ENCODE measurements at regions of chr18 and their contacts with region 1.

Region 1: GRCh38 chr18:47163241-47163640 is 12.9 kb downstream of the IER3IP1 start:
- DNase-seq: no peak
- ATAC-seq: peak; percentile 93
- H3K4me3 ChIP-seq: 0 out of 2 replicates have a peak overlapping the region, but pooled peaks have one; percentile 7
- H3K27ac ChIP-seq: peak overlapping the region; percentile 17; the same call in 1 of the 2 replicates
- H3K4me1 ChIP-seq: peaks cover 13% of the 10 kb centered on the region
- H3K27me3 ChIP-seq: no peaks in the 10 kb centered on the region
- CTCF ChIP-seq: no peak
- EP300 ChIP-seq: no peak
- POLR2A ChIP-seq: no peak
- RAD21 ChIP-seq: no peak

Region 2: GRCh38 chr18:46917108-46917802 is 246.0 kb before region 1 on chr18 and contains the starts of genes KATNAL2 and PIAS2:
- CTCF ChIA-PET with region 1: no interaction called
- POLR2A ChIA-PET with region 1: no interaction called
- RAD21 ChIA-PET with region 1: no interaction called
- SMC1A ChIA-PET with region 1: no interaction called
- in situ Hi-C with region 1: no loop called
- intact Hi-C with region 1: loop called (anchors 10 kb)
- DNase-seq: no peak
- ATAC-seq: peak; percentile 90
- H3K4me3 ChIP-seq: peak within 1 kb of the TSS; percentile 94
- H3K27ac ChIP-seq: peak within 1 kb of the TSS; percentile 82
- H3K4me1 ChIP-seq: no peaks in the 10 kb centered on the region; the same call in 1 of the 2 replicates
- H3K27me3 ChIP-seq: no peaks in the 10 kb centered on the region
- CTCF ChIP-seq: peak in 1 of 3 experiments; percentile 42; a peak in 2 of 6 replicates
- EP300 ChIP-seq: no peak
- POLR2A ChIP-seq: peak; percentile 97
- RAD21 ChIP-seq: peak; percentile 53; the same call in 1 of the 2 replicates
- polyA plus RNA-seq, gene KATNAL2: 0.53 to 0.95 TPM
- polyA plus RNA-seq, gene PIAS2: 4.0 to 7.2 TPM

Region 3: GRCh38 chr18:47075098-47075883 is 88.0 kb before region 1 on chr18:
- CTCF ChIA-PET with region 1: no interaction called
- POLR2A ChIA-PET with region 1: no interaction called
- RAD21 ChIA-PET with region 1: no interaction called
- SMC1A ChIA-PET with region 1: no interaction called
- in situ Hi-C with region 1: no loop called
- intact Hi-C with region 1: no loop called
- DNase-seq: no peak
- ATAC-seq: peak; percentile 48
- H3K4me3 ChIP-seq: no peak overlapping the region
- H3K27ac ChIP-seq: no peak overlapping the region
- H3K4me1 ChIP-seq: no peaks in the 10 kb centered on the region
- H3K27me3 ChIP-seq: no peaks in the 10 kb centered on the region; a peak in 1 of 4 replicates
- CTCF ChIP-seq: no peak
- EP300 ChIP-seq: no peak
- POLR2A ChIP-seq: no peak
- RAD21 ChIP-seq: no peak

Region 4: DNA sequence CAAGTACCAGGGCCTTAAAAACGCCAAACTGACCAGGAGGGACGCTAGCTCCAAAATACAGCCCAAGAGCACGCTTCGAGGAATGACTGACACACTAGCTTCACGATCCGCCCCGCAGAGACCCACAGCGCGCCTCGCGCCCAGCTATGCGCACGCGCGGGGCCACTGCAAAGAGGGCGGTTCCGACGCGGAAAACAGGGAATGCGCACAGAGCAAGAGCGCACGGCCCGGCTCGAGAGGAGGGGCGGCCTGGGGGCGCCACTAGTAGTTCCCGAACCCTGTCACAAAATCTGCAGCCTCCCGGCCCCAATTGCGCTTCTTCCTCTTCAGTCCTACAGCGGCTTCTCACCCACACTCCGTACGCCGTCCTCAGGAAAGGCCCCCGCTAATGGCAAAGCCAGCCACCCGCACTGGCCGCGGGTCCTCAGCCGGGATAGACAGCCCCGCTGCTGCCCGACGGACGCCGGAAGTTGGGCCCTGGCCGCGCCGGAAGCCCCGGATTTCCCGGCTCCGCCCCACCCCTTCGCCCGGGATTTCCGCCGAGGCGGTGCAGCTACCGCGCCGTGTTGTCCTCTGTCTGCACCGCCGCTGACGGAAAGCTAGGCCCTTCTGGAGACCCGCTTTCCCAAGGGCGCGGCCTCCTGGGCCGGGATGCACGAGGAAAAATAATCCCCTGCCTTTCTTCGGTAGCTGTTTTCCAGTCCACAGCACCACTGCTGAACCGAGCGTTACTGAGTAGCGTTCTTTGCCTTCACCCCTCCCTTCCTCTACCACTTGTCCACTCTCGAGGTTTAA is 13.0 kb before region 1 on chr18 and contains the start of gene HDHD2:
- CTCF ChIA-PET with region 1: interaction called, 7 read pairs
- POLR2A ChIA-PET with region 1: interaction called, 25 read pairs
- RAD21 ChIA-PET with region 1: interaction called, 3 read pairs
- SMC1A ChIA-PET with region 1: interaction called, 8 read pairs
- in situ Hi-C with region 1: no loop called
- intact Hi-C with region 1: no loop called
- DNase-seq: no peak
- ATAC-seq: peak; percentile 95
- H3K4me3 ChIP-seq: peak within 1 kb of the TSS; percentile 72
- H3K27ac ChIP-seq: peak within 1 kb of the TSS; percentile 84
- H3K4me1 ChIP-seq: peaks cover 3% of the 10 kb centered on the region; the same call in 1 of the 2 replicates
- H3K27me3 ChIP-seq: no peaks in the 10 kb centered on the region
- CTCF ChIP-seq: no peak
- EP300 ChIP-seq: no peak
- POLR2A ChIP-seq: peak; percentile 89
- RAD21 ChIP-seq: no peak
- polyA plus RNA-seq, gene HDHD2: 4.6 to 14.9 TPM